ENCODE measurements at regions of chr2 and their contacts with region 1.

Region 1: DNA sequence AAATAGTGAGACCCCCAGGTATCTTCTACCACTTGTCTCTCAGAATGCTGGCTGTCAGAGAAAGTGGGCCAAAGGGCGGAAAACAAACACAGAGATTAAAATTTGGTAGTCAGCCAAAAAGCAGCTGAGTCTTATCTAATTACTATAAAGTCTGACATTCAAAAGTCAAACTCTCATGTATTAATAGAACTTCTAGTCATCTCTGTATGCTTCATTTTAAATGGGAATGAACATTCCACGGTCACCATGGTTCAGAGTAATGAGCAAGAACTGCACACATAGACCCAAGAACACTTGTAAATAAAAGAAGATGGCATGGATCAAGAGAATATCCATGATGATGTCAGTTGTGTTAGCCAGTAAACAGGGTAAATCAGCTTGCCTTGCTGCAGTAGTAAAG is 1267.0 kb upstream of the CHAC2 start:
- DNase-seq: no peak
- ATAC-seq: no peak

Region 2: GRCh38 chr2:52312486-52312885 is 188.1 kb before region 1 on chr2:
- intact Hi-C with region 1: no loop called
- DNase-seq: no peak
- ATAC-seq: no peak

Region 3: DNA sequence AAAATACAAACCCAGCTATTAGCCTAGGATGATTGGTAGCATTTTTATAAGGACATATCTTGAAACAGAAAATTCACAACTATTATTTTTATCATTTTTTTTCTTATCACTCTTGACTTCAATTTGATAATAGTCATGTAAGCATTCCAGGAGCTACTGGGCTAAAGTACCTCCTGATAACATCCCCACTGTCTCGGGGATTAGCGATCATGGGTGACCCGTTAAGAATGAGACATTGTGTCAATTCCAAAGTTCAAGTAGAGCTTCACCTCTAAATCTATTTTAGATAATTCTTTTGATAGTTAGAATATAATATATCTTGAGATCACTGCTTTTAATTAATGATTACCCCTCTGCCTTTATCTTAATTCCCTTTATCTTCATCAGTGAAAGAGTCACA is 62.6 kb after region 1 on chr2:
- intact Hi-C with region 1: loop called (anchors 10 kb)
- DNase-seq: no peak
- ATAC-seq: no peak